Mammary epithelial cell (primary cell): ENCODE measurements at regions of chr2 and their contacts with region 1.

Region 1: GRCh38 chr2:26469092-26469710 is 8.7 kb downstream of the OTOF start:
- DNase-seq: peak; percentile 45
- H3K4me3 ChIP-seq: no peak overlapping the region
- H3K27ac ChIP-seq: no peak overlapping the region
- H3K4me1 ChIP-seq: no peaks in the 10 kb centered on the region
- H3K27me3 ChIP-seq: no peaks in the 10 kb centered on the region
- CTCF ChIP-seq: peak; percentile 80 to 88

Region 2: DNA sequence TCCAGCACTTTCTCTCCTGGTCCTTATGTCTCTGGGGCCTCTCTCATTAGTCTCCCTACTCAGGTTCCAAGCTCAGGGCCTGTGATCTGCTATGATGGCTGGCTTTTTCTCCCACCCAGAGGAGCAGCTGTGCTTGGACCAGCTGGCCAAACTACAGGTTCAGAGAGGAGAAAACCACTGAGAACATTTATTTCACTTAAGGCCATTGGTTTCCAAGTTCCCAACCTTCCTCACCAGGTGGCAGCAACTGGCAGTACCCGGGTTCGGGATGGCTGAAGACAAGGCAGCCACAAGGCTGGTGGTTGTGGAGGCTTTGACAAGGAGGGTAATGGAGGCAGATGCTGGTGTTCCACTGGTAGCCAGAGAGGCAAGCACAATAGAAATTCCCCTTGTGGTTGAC is 153.2 kb before region 1 on chr2:
- CTCF ChIA-PET with region 1: no interaction called
- dilution Hi-C with region 1: no loop called
- in situ Hi-C with region 1: no loop called
- intact Hi-C with region 1: loop called (anchors 2 kb)
- DNase-seq: no peak
- H3K4me3 ChIP-seq: no peak overlapping the region
- H3K27ac ChIP-seq: no peak overlapping the region
- H3K4me1 ChIP-seq: peaks cover 10% of the 10 kb centered on the region
- H3K27me3 ChIP-seq: no peaks in the 10 kb centered on the region
- CTCF ChIP-seq: peak; percentile 5 to 33

Region 3: DNA sequence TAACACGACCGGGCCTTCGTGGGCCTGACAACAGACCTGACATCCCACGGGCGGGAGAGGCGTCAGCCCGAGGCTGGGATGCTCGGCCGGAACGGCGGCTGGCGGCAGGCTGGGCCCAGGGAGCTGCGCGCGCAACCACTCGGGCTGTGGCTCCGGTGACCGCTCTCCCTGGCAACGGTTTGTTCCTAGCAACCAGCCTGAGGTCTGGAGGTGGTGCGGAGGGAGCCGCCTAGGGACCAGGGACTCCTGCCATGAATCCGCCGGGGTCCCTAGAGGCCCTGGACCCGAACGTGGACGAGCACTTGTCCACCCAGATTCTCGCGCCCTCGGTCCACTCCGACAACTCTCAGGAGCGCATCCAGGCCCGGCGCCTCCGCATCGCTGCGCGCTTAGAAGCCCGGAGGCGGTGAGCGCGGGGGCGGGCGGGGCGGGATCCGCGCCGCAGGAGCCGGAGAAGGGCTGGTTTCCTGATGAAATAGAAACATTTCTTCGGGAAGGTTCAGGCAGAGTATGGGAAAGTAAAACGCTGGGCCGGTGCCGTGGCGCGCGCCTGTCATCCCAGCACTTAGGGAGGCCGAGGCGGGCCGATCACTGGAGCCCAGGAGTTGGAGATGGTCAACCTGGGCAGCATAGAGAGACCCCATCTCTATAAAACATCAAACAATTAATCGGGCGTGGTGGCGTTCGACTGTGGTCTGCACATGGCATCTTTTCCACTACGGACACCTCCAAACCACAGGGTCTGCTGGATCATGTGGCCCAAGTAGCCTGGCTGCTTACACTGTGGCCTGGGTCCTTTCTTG is 67.3 kb before region 1 on chr2 and contains the start of gene DRC1:
- CTCF ChIA-PET with region 1: no interaction called
- dilution Hi-C with region 1: no loop called
- in situ Hi-C with region 1: no loop called
- intact Hi-C with region 1: loop called (anchors 5 kb)
- DNase-seq: peak; percentile 70
- H3K4me3 ChIP-seq: peak within 1 kb of the TSS in 2 of 3 experiments; percentile 41 to 50
- H3K27ac ChIP-seq: peak within 1 kb of the TSS; percentile 63
- H3K4me1 ChIP-seq: peaks cover 34% of the 10 kb centered on the region
- H3K27me3 ChIP-seq: no peaks in the 10 kb centered on the region
- CTCF ChIP-seq: no peak
- total RNA-seq, gene DRC1: 0.33 to 0.38 TPM

Region 4: DNA sequence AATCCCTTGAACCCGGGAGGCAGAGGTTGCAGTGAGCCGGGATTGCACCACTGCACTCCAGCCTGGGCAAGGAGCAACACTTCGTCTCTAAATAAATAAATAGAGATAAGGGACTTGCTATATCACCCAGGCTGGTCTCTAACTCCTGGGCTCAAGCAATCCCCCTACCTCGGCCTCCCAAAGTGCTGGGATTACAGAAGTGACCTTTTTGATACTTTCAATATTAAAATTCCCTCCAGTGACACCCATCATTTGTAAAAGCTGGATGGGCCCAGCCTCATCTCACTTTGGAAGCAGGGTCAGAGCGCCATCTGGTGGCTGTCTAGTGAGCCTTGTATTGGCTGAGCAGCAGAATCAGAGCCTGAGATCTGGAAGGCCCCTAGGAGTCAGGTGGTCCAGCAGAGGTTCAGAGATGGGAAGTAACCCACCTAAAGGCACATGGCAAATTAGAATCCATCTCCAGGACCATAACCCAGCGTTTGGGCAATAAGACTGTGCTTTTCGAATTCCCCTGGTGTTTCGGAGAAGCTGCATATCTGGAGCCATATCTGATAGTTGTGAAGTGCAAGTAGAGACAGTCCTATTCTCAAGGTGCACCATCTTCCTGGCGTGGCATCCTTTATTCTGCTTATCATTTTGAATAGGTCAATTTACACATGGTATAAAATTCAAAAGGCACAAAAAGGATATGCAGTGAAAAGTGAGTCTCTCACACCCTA is 276.6 kb after region 1 on chr2:
- CTCF ChIA-PET with region 1: no interaction called
- dilution Hi-C with region 1: no loop called
- in situ Hi-C with region 1: no loop called
- intact Hi-C with region 1: loop called (anchors 1 kb)
- DNase-seq: peak; percentile 48
- H3K4me3 ChIP-seq: no peak overlapping the region
- H3K27ac ChIP-seq: no peak overlapping the region
- H3K4me1 ChIP-seq: no peaks in the 10 kb centered on the region
- H3K27me3 ChIP-seq: peaks cover 1% of the 10 kb centered on the region
- CTCF ChIP-seq: peak; percentile 86 to 96